Astrocyte of the cerebellum (primary cell): ENCODE measurements at regions of chr11 and their contacts with region 1.

Region 1: DNA sequence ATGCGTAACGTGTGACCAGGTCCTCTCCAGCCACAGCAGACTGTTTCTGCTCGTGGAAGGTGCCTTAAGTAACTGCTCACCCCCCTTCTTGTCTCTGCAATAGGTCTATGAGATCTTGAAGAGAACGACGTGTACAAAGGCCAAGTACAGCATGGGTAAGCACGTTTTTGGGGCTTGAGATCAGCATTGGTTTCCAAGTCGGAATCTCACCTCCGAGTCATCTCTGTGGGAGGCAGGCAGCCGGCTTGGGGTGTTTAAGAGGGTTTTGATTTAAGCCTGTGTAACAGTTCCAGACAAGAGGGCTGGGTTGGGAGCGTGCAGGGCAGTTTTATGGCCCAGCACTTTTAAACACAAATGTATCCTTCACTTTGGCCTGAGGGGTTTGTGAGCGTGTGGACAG is 30.1 kb downstream of the ANO1 start:
- DNase-seq: no peak
- H3K4me3 ChIP-seq: no peak overlapping the region
- CTCF ChIP-seq: no peak

Region 2: GRCh38 chr11:69867738-69868493 is 240.3 kb before region 1 on chr11:
- in situ Hi-C with region 1: loop called (anchors 10 kb)
- DNase-seq: peak; percentile 19
- H3K4me3 ChIP-seq: no peak overlapping the region
- CTCF ChIP-seq: no peak

Region 3: DNA sequence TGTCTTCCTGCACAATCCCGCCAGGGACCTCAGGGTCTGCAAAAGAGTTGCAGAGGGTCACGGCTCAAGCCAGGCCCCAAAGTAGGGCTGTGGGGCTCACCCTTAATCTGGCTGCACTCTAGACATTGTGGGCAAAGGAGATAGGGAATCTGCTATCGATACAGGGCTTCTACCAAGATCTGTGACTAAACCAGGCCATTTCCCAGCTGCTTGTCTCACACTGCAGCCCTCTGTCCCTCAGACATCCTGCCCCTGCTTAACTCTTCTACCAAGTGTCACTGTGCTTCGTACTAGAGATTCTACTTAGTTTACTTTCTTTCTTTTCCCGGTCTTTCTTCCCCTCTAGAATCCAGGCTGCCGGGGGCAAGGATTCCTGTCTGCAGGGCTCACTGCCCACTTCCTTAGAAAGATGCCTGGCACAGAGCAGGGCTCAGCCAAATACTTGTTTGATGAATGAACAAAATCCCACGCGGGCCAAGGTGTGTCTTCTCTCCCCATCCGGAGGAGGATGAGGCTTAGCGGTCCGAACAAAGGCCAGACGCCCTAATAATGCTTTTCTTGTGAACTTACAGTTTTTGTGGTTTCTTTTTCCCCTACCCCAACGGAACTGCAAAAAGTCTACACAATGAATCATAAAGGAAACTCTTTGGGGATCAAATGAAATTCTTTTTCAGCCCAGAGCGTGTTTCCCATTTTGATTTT is 91.4 kb before region 1 on chr11:
- in situ Hi-C with region 1: no loop called
- DNase-seq: peak; percentile 27
- H3K4me3 ChIP-seq: no peak overlapping the region
- CTCF ChIP-seq: no peak

Region 4: GRCh38 chr11:70210051-70210501 is 101.8 kb after region 1 on chr11:
- in situ Hi-C with region 1: no loop called
- DNase-seq: no peak
- H3K4me3 ChIP-seq: no peak overlapping the region
- CTCF ChIP-seq: no peak